Aorta (tissue), 5 donors: ENCODE measurements at regions of chr2 and their contacts with region 1.

Region 1: GRCh38 chr2:173027181-173028128 is 48.2 kb upstream of the MAP3K20 start:
- DNase-seq: peak; percentile 82 to 87
- ATAC-seq: peak; percentile 92
- H3K4me3 ChIP-seq: no peak overlapping the region
- H3K27ac ChIP-seq: peak overlapping the region; percentile 21 to 64
- H3K4me1 ChIP-seq: peaks cover 0 to 4% of the 10 kb centered on the region in 2 donors
- H3K27me3 ChIP-seq: no peaks in the 10 kb centered on the region

Region 2: GRCh38 chr2:172806493-172806892 is 221.0 kb before region 1 on chr2:
- intact Hi-C with region 1: loop called in 1 of 2 experiments (anchors 10 kb)
- DNase-seq: no peak
- ATAC-seq: peak; percentile 74
- H3K4me3 ChIP-seq: no peak overlapping the region
- H3K27ac ChIP-seq: no peak overlapping the region
- H3K4me1 ChIP-seq: no peaks in the 10 kb centered on the region
- H3K27me3 ChIP-seq: no peaks in the 10 kb centered on the region

Region 3: GRCh38 chr2:173210270-173211196 is 183.1 kb after region 1 on chr2:
- intact Hi-C with region 1: loop called (anchors 1 kb)
- DNase-seq: peak in 1 of 2 donors; percentile 56
- ATAC-seq: peak; percentile 94
- H3K4me3 ChIP-seq: no peak overlapping the region
- H3K27ac ChIP-seq: no peak overlapping the region
- H3K4me1 ChIP-seq: peaks cover 0 to 5% of the 10 kb centered on the region in 2 donors
- H3K27me3 ChIP-seq: no peaks in the 10 kb centered on the region